CD4-positive, alpha-beta memory T cell (primary cell): ENCODE measurements at regions of chr5 and their contacts with region 1.

Region 1: GRCh38 chr5:103475629-103476240 is 86.9 kb downstream of the NUDT12 start:
- DNase-seq: peak in 3 of 5 donors; percentile 21 to 22 (median 22)
- H3K4me3 ChIP-seq: no peak overlapping the region
- H3K4me3 Mint-ChIP-seq: no peak overlapping the region
- H3K27ac ChIP-seq: no peak overlapping the region
- H3K27ac Mint-ChIP-seq: no peak overlapping the region
- H3K4me1 ChIP-seq: no peaks in the 10 kb centered on the region
- H3K4me1 Mint-ChIP-seq: no peaks in the 10 kb centered on the region
- H3K27me3 ChIP-seq: no peaks in the 10 kb centered on the region
- H3K27me3 Mint-ChIP-seq: peaks cover 9 to 11% of the 10 kb centered on the region in 2 donors

Region 2: GRCh38 chr5:102536323-102536928 is 939.3 kb before region 1 on chr5:
- CTCF ChIA-PET with region 1: no interaction called
- POLR2A ChIA-PET with region 1: no interaction called
- intact Hi-C with region 1: loop called (anchors 2 kb)
- DNase-seq: peak in 2 of 5 donors; percentile 1 to 2
- H3K4me3 ChIP-seq: no peak overlapping the region
- H3K4me3 Mint-ChIP-seq: no peak overlapping the region
- H3K27ac ChIP-seq: no peak overlapping the region
- H3K27ac Mint-ChIP-seq: no peak overlapping the region
- H3K4me1 ChIP-seq: no peaks in the 10 kb centered on the region
- H3K4me1 Mint-ChIP-seq: no peaks in the 10 kb centered on the region
- H3K27me3 ChIP-seq: no peaks in the 10 kb centered on the region
- H3K27me3 Mint-ChIP-seq: peaks cover 0 to 1% of the 10 kb centered on the region in 2 donors

Region 3: GRCh38 chr5:102922799-102923477 is 552.8 kb before region 1 on chr5:
- CTCF ChIA-PET with region 1: no interaction called
- POLR2A ChIA-PET with region 1: no interaction called
- intact Hi-C with region 1: no loop called
- DNase-seq: no peak
- H3K4me3 ChIP-seq: no peak overlapping the region
- H3K4me3 Mint-ChIP-seq: no peak overlapping the region
- H3K27ac ChIP-seq: no peak overlapping the region
- H3K27ac Mint-ChIP-seq: no peak overlapping the region
- H3K4me1 ChIP-seq: no peaks in the 10 kb centered on the region
- H3K4me1 Mint-ChIP-seq: no peaks in the 10 kb centered on the region
- H3K27me3 ChIP-seq: no peaks in the 10 kb centered on the region
- H3K27me3 Mint-ChIP-seq: no peaks in the 10 kb centered on the region

Region 4: DNA sequence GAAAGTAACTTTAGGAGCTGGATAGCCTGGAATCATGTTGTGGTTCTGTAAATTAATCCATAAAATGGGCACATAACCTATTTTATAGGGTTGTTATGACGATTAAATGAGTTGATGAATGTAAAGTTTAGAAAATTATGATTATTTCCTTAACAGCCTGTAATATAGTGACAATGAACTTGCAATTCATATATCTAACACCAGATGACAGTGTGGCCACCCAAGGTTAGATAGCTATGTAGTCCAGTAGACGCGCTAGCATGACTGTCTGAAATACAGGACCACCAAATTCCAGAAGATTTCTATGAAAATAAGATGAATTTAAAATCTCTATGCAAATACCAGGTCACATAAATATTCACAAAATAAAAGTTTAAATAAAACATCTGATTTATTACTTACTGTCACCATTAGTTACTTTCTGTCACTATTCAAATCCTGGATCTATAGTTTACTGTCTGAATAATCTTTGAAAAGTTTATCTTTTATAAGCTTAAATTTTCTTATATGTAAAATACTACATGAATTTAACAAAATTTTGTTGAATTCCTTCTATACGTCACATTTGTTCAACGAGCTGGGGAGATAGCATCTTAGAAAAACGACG is 243.2 kb before region 1 on chr5:
- CTCF ChIA-PET with region 1: interaction called, 43 read pairs
- POLR2A ChIA-PET with region 1: no interaction called
- intact Hi-C with region 1: no loop called
- DNase-seq: peak in 4 of 5 donors; percentile 19 to 35 (median 33)
- H3K4me3 ChIP-seq: no peak overlapping the region
- H3K4me3 Mint-ChIP-seq: no peak overlapping the region
- H3K27ac ChIP-seq: no peak overlapping the region
- H3K27ac Mint-ChIP-seq: no peak overlapping the region
- H3K4me1 ChIP-seq: no peaks in the 10 kb centered on the region
- H3K4me1 Mint-ChIP-seq: no peaks in the 10 kb centered on the region
- H3K27me3 ChIP-seq: no peaks in the 10 kb centered on the region
- H3K27me3 Mint-ChIP-seq: peaks cover 8 to 9% of the 10 kb centered on the region in 2 donors